PC-9 (cell line): ENCODE measurements at regions of chr3 and their contacts with region 1.

Region 1: GRCh38 chr3:56812754-56813650 is 11.3 kb upstream of the ARHGEF3 start:
- DNase-seq: peak; percentile 9 to 67
- H3K4me3 ChIP-seq: no peak overlapping the region
- H3K27ac ChIP-seq: peak overlapping the region; percentile 54
- H3K4me1 ChIP-seq: peaks cover 56% of the 10 kb centered on the region
- H3K27me3 ChIP-seq: no peaks in the 10 kb centered on the region
- CTCF ChIP-seq: no peak

Region 2: DNA sequence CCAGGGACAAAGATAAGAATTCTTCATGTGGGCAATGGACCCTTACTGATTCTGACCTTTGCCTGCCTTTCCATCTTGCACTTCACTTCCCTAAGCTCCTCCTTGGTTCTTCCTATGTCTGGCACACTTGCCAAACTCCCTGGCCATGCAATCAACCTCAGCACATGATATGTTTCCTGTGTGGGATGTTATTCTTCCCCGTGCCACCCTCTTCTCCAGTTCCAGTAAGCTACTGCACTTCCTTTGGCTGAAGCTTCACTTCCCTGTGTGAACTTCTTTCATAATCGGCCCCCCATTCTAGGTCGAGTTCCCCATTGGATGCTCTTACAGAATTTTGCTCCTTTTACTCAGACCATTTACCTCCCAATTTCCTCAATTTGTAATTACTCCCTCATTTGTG is 119.3 kb before region 1 on chr3:
- CTCF ChIA-PET with region 1: no interaction called
- POLR2A ChIA-PET with region 1: interaction called, 20 read pairs
- intact Hi-C with region 1: no loop called
- DNase-seq: no peak
- H3K4me3 ChIP-seq: no peak overlapping the region
- H3K27ac ChIP-seq: no peak overlapping the region
- H3K4me1 ChIP-seq: peaks cover 6% of the 10 kb centered on the region
- H3K27me3 ChIP-seq: no peaks in the 10 kb centered on the region
- CTCF ChIP-seq: no peak

Region 3: DNA sequence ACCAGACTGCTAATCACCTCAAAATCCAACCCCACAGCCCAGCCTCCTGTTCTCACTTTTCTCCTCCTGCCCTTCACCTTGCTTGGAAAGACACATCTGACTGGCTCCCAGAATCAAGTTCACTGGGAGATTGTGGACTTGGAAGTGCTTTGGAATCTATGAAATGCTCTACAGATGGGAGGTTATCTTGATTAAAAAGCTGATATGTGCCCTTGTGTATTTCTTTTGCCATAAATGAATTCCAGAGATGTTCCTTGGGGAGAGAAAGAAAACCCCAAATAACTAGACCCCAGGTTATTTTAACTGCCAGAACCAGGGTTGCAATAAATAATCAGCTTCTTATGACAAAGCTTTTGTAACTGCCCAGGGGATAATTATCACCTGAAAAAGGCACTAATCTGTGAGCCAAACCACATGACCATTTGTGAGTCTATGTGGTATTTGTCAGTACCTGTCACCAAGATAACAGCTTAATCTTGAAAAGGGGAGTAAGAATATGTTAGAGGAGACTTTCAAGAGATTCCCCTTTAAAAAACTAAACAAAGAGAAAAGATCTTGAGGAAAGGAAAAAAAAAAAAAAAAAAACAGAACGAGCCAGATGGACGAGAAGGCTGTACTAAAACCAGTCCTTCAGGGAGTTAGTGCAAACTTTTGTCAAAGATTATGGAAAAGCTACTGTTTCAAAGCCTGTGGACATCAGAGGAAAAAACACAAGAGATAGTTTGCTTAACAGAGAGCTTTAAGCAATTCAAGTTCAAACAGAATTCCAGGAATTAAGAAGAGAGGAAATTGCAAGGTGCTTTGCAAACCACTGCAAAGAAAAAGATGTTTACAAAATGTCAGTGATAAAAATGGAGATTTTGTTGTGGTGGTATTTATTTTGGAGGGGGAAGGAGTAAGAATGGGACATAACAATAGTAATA is 10.7 kb after region 1 on chr3:
- CTCF ChIA-PET with region 1: interaction called, 13 read pairs
- POLR2A ChIA-PET with region 1: no interaction called
- intact Hi-C with region 1: no loop called
- DNase-seq: peak in 1 of 2 experiments; percentile 9
- H3K4me3 ChIP-seq: no peak overlapping the region
- H3K27ac ChIP-seq: no peak overlapping the region
- H3K4me1 ChIP-seq: peaks cover 31% of the 10 kb centered on the region
- H3K27me3 ChIP-seq: no peaks in the 10 kb centered on the region
- CTCF ChIP-seq: no peak

Region 4: DNA sequence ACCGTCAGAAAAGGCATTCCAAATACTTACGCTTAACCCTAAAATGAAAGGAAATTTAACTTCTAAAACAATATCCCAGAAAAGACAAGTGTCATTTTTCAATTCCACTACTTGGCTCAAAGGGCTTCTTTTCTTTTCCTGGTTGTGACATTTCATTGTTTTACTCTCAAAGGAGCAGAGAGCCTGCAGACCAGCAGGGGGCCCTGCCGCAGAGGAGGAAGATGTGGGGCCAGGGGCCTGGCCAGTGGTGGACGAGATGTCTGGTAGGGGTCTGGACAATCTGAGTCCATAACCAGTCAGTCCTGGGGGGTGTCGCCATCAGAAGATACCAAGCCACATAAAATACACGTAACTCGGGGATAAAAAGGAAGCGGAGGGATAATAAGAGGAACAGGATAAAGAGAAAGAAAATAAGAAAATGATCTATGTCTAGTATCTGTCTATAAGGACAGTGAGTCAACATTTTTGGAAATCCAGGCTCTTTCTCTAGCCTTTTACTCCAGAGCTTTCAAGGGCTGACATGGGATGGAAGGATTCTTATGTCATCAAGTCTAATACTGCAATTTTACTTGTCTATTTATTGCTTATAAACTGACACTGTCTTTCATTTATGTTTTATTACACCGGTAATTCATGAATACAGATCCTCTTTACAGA is 43.0 kb after region 1 on chr3:
- CTCF ChIA-PET with region 1: no interaction called
- POLR2A ChIA-PET with region 1: no interaction called
- intact Hi-C with region 1: loop called (anchors 5 kb)
- DNase-seq: no peak
- H3K4me3 ChIP-seq: no peak overlapping the region
- H3K27ac ChIP-seq: no peak overlapping the region
- H3K4me1 ChIP-seq: peaks cover 33% of the 10 kb centered on the region
- H3K27me3 ChIP-seq: no peaks in the 10 kb centered on the region
- CTCF ChIP-seq: peak; percentile 60

Region 5: DNA sequence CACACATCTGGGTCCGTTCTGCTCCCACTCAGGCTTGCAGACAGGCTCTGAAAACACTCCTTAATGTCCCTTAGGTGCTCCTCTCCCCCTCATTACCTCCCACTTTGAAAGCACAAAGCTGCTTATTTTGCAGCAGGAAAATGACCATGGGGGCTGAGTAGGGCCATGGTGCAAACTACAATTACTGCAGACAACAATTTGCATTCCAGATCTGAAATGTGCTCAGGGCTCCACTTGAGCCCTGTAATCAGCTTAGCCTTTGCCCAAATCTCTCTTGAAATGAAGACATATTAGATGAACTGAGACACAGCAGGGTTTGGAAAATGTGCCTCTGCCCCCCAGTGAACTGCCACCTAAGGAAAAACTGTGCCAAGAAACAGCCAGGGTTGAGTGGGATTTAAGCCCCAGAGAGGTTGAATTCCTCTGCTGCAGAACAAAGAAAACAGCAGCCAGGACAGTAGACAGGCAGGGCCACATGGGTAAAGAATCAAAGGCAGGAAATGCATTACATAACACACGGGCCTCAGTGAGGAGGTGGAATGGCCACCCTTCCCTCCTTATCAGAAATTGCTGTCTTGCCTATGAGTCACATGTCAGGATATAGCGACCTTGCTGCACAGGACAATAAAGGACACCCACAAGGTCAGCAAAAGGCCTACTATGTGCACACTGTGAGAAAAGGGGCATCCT is 115.5 kb after region 1 on chr3:
- CTCF ChIA-PET with region 1: no interaction called
- POLR2A ChIA-PET with region 1: interaction called, 4 read pairs
- intact Hi-C with region 1: loop called (anchors 5 kb)
- DNase-seq: peak; percentile 23 to 36
- H3K4me3 ChIP-seq: no peak overlapping the region
- H3K27ac ChIP-seq: no peak overlapping the region
- H3K4me1 ChIP-seq: peaks cover 20% of the 10 kb centered on the region
- H3K27me3 ChIP-seq: no peaks in the 10 kb centered on the region
- CTCF ChIP-seq: no peak

Region 6: DNA sequence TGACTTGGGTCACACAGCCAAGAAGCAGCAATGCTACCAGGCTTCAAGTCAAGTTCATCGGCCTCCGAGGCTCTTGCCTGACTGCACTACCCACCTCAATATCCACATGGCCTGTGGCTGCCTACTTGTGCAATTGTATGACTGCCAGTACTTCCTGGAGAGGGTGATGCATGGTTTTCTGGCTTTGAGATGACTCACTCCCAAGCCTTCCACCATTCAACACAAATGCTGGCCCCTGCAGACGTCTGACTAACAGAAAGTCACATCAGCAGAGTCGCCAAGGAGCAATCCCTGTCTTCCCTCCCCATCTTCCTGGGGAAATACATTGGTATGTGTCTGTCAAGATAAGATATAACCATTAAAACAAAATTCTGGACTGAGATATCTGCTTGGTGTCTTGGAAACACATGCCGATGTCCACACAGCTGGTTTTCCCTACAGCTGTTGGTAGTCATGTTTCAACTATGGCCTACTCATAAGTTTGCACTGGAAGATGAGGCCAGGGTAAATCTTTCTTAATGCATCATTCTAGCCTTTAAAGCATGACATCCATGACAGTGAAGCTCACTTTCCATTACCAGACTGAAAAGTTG is 167.9 kb after region 1 on chr3:
- CTCF ChIA-PET with region 1: no interaction called
- POLR2A ChIA-PET with region 1: no interaction called
- intact Hi-C with region 1: loop called (anchors 1 kb)
- DNase-seq: peak; percentile 69 to 86
- H3K4me3 ChIP-seq: no peak overlapping the region
- H3K27ac ChIP-seq: peak overlapping the region; percentile 56
- H3K4me1 ChIP-seq: peaks cover 10% of the 10 kb centered on the region
- H3K27me3 ChIP-seq: no peaks in the 10 kb centered on the region
- CTCF ChIP-seq: no peak